PC-3 (cell line): ENCODE measurements at regions of chr3 and their contacts with region 1.

Region 1: GRCh38 chr3:188962253-188963247 is 209.2 kb upstream of the TPRG1 start:
- DNase-seq: no peak
- ATAC-seq: no peak
- H3K4me3 ChIP-seq: no peak overlapping the region
- H3K27ac ChIP-seq: no peak overlapping the region
- H3K4me1 ChIP-seq: no peaks in the 10 kb centered on the region
- H3K27me3 ChIP-seq: no peaks in the 10 kb centered on the region
- CTCF ChIP-seq: no peak

Region 2: GRCh38 chr3:188830893-188831292 is 131.7 kb before region 1 on chr3:
- CTCF ChIA-PET with region 1: interaction called, 20 read pairs
- POLR2A ChIA-PET with region 1: no interaction called
- intact Hi-C with region 1: no loop called
- DNase-seq: peak; percentile 44
- ATAC-seq: no peak
- H3K4me3 ChIP-seq: no peak overlapping the region
- H3K27ac ChIP-seq: no peak overlapping the region
- H3K4me1 ChIP-seq: no peaks in the 10 kb centered on the region
- H3K27me3 ChIP-seq: no peaks in the 10 kb centered on the region
- CTCF ChIP-seq: peak; percentile 66

Region 3: GRCh38 chr3:188870431-188870830 is 92.1 kb before region 1 on chr3:
- CTCF ChIA-PET with region 1: no interaction called
- POLR2A ChIA-PET with region 1: no interaction called
- intact Hi-C with region 1: no loop called
- DNase-seq: no peak
- ATAC-seq: no peak
- H3K4me3 ChIP-seq: no peak overlapping the region
- H3K27ac ChIP-seq: no peak overlapping the region
- H3K4me1 ChIP-seq: 0 out of 2 replicates have a peak, but pooled peaks cover 5% of the 10 kb centered on the region
- H3K27me3 ChIP-seq: no peaks in the 10 kb centered on the region
- CTCF ChIP-seq: no peak

Region 4: GRCh38 chr3:189084620-189085019 is 122.1 kb after region 1 on chr3:
- CTCF ChIA-PET with region 1: no interaction called
- POLR2A ChIA-PET with region 1: no interaction called
- intact Hi-C with region 1: no loop called
- DNase-seq: no peak
- ATAC-seq: no peak
- H3K4me3 ChIP-seq: no peak overlapping the region
- H3K27ac ChIP-seq: no peak overlapping the region
- H3K4me1 ChIP-seq: no peaks in the 10 kb centered on the region
- H3K27me3 ChIP-seq: peaks cover 10% of the 10 kb centered on the region; the same call in 1 of the 2 replicates
- CTCF ChIP-seq: no peak